Psoas muscle (tissue), 8 donors: ENCODE measurements at regions of chr7 and their contacts with region 1.

Region 1: GRCh38 chr7:4973728-4974198 is 14.8 kb upstream of the MMD2 start:
- DNase-seq: peak; percentile 91 to 94
- ATAC-seq: peak; percentile 96 to 99 (median 98)
- H3K4me3 ChIP-seq: peak overlapping the region; percentile 88
- H3K27ac ChIP-seq: peak overlapping the region; percentile 78
- H3K4me1 ChIP-seq: peaks cover 4% of the 10 kb centered on the region
- H3K27me3 ChIP-seq: no peaks in the 10 kb centered on the region
- CTCF ChIP-seq: peak; percentile 69

Region 2: GRCh38 chr7:4797858-4798705 is 175.7 kb before region 1 on chr7:
- intact Hi-C with region 1: loop called in 1 of 2 experiments (anchors 5 kb)
- DNase-seq: peak; percentile 48 to 77
- ATAC-seq: peak; percentile 86 to 90 (median 88)
- H3K4me3 ChIP-seq: no peak overlapping the region
- H3K27ac ChIP-seq: no peak overlapping the region
- H3K4me1 ChIP-seq: no peaks in the 10 kb centered on the region
- H3K27me3 ChIP-seq: no peaks in the 10 kb centered on the region
- CTCF ChIP-seq: peak; percentile 85

Region 3: DNA sequence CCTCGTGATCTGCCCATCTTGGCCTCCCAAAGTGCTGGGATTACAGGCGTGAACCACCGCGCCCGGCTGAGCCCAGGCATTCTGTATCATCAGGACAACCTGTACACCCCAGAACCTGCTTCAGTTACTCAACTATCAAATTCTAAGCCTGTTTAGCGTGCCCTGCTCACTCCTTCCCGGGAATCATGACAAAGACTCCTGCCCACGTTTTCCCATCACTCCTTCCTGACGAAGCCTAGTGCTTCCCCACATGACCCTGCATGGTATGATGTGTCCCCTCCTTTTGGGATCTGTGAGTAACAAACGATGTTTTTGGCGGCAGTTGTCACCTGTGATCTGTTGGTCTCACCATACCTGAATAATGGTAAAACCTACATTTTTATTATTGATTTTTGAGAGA is 78.0 kb before region 1 on chr7:
- intact Hi-C with region 1: no loop called
- DNase-seq: no peak
- ATAC-seq: no peak
- H3K4me3 ChIP-seq: no peak overlapping the region
- H3K27ac ChIP-seq: no peak overlapping the region
- H3K4me1 ChIP-seq: no peaks in the 10 kb centered on the region
- H3K27me3 ChIP-seq: peaks cover 0 to 11% (median 3%) of the 10 kb centered on the region in 3 donors
- CTCF ChIP-seq: no peak

Region 4: GRCh38 chr7:5088906-5089305 is 115.1 kb after region 1 on chr7:
- intact Hi-C with region 1: loop called in 1 of 2 experiments (anchors 5 kb)
- DNase-seq: no peak
- ATAC-seq: no peak
- H3K4me3 ChIP-seq: no peak overlapping the region
- H3K27ac ChIP-seq: no peak overlapping the region
- H3K4me1 ChIP-seq: no peaks in the 10 kb centered on the region
- H3K27me3 ChIP-seq: peaks cover 0 to 16% (median 0%) of the 10 kb centered on the region in 3 donors
- CTCF ChIP-seq: no peak

Region 5: GRCh38 chr7:5193880-5194279 is 220.1 kb after region 1 on chr7:
- intact Hi-C with region 1: loop called in 1 of 2 experiments (anchors 10 kb)
- DNase-seq: no peak
- ATAC-seq: no peak
- H3K4me3 ChIP-seq: no peak overlapping the region
- H3K27ac ChIP-seq: no peak overlapping the region
- H3K4me1 ChIP-seq: peaks cover 13% of the 10 kb centered on the region
- H3K27me3 ChIP-seq: no peaks in the 10 kb centered on the region
- CTCF ChIP-seq: no peak